ENCODE measurements at regions of chr18 and their contacts with region 1.

Region 1: GRCh38 chr18:10401521-10401920 is 52.9 kb upstream of the APCDD1 start:
- DNase-seq: no peak
- ATAC-seq: no peak
- H3K4me3 ChIP-seq: no peak overlapping the region
- H3K27ac ChIP-seq: no peak overlapping the region
- H3K4me1 ChIP-seq: no peaks in the 10 kb centered on the region
- H3K27me3 ChIP-seq: no peaks in the 10 kb centered on the region
- CTCF ChIP-seq: no peak
- POLR2A ChIP-seq: no peak

Region 2: GRCh38 chr18:10453806-10454673 is 52.5 kb after region 1 on chr18 and contains the start of gene APCDD1:
- intact Hi-C with region 1: loop called in 1 of 2 experiments (anchors 5 kb)
- DNase-seq: peak in 2 of 3 donors; percentile 37 to 50
- ATAC-seq: peak; percentile 59 to 68 (median 66)
- H3K4me3 ChIP-seq: peak within 1 kb of the TSS; percentile 32 to 43 (median 38)
- H3K27ac ChIP-seq: no peak within 1 kb of the TSS
- H3K4me1 ChIP-seq: peaks cover 0 to 6% (median 0%) of the 10 kb centered on the region in 4 donors
- H3K27me3 ChIP-seq: peaks cover 0 to 8% of the 10 kb centered on the region in 2 donors
- CTCF ChIP-seq: no peak
- POLR2A ChIP-seq: no peak
- total RNA-seq, gene APCDD1: 0.42 to 2.7 (median 0.71) TPM